ENCODE measurements at regions of chr7 and their contacts with region 1.

Region 1: DNA sequence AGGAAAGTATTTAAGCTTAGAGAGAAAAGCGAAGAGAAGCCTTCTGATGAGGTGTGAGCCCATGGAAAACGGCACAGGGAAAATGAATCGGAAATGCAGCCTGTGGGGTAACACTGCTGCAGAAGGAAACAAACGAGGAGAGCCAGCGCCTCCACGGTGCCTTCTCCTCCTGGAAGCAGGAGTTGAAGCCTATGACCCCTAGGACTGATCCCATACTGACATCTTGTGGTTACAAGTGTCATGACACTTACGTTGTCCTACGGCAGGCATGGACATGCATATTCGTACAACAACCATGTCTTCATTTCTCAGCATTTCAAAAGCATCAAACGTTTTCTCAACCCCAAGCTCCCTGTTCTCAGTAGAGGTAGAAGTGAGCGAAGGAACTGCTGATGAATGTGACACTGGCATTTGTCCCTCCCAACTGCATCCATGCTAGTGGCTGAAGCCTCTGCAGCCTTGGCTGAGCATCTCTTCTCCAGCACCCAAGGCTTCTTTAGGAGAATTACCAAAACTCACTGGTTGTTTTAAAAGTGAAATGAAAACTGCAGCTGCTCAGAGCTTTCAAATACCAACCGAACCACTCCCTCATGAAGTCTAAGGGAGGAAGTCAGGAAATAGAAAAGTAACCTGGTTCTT is 160.2 kb downstream of the JAZF1 start:
- DNase-seq: peak; percentile 58
- ATAC-seq: peak; percentile 79 to 85

Region 2: GRCh38 chr7:27739909-27740448 is 280.4 kb before region 1 on chr7 and contains the start of gene TAX1BP1:
- intact Hi-C with region 1: loop called in 1 of 2 experiments (anchors 5 kb)
- DNase-seq: peak; percentile 96
- ATAC-seq: peak; percentile 99 to 100
- total RNA-seq, gene TAX1BP1: 119 to 133 TPM

Region 3: DNA sequence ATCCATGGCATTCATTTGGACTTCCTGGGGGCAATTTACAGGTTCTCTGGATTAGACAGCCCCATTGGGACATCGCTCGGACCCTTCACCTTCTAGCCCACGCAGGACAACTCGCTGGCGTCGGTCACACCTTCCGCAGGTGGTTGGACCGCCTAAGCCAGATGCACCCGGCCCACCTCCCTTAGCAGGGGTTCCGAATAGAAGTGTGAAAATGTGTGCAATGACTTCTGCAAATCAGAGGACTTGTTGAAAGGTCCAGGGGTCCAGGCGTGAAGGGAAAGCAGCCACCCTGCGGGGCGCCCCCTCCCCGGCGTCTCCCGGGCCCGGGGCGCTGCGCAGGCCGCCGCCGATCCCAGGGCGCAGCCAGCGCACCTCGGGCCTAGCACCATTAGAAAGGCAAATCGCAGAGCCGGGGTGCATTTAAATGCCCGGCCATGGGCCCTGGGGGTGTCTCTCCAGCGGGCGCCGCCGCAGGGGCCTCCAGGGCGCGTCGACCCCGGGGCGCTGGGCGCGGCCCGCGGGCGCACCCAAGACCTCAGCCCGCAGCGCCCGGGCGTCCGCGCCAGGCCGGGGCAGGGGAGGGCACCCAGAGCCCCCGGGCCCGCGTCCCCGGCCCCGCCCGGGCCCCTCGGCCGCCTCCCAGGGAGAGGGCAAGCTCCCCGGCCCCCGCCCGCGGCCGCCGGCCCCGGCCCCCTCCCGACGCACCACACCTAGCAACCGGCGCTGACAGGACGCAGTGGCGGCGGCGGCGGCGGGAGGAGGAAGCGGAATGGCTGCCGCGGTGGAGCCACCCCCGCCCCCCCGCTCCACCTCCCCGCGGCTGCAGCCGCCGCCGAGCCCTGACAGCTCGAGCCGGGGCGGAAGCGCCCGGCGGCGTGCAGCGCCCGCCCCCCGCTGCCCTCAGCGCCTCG is 159.0 kb after region 1 on chr7:
- intact Hi-C with region 1: no loop called
- DNase-seq: peak; percentile 86
- ATAC-seq: peak; percentile 73 to 80

Measured in left cardiac atrium (tissue), 4 donors.